Esophagus muscularis mucosa (tissue), 4 donors: ENCODE measurements at regions of chr1 and their contacts with region 1.

Region 1: DNA sequence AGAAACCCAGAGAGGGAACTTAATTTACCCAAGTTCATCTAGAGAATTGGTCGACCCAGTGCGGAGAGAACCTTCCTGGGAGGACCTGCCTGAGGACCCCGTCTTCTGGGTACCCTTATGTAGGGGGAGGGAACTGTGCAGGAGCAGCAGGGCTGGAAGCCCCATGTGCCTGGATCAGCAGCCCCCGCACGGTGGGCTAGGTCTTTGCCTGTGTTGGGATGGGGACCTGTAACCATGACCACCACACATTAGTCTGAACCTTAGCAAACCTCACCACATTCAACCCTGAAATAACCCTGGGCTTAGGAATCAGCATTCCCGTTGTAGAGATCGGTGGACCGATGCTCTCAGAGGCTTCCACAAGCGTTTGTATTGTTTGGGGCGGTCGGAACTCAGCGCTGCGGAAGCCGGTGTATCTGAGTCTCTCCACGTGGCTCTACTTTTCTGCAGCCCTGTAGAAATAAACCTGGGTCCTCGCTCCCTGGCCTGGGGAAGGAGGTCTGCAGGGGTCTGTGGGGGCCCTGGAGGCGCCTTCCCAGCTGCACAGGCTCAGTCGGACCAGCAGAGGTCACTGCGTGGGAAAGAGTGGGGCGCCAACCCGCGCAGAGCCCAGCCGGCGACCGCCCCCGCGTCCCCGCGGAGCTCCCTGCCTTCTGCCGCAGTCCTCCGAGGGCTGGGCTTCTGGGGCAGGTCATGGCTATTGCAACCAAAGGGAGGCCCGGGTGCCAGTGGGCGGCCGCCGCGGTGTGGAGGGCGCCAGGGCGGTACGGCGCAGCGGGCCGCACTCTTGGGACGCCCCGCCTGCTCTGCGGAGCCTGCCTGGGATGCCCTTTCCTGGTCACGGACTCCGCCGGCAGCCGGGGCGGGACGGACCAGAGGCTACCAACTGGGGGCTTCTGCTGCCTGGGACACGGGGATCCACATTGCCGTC is 36.2 kb upstream of the KCNA10 start:
- DNase-seq: no peak
- H3K4me3 ChIP-seq: peak overlapping the region; percentile 46 to 64 (median 52)
- H3K27ac ChIP-seq: peak overlapping the region; percentile 25 to 70 (median 52)
- H3K4me1 ChIP-seq: peaks cover 6 to 20% (median 16%) of the 10 kb centered on the region in 4 donors
- H3K27me3 ChIP-seq: peaks cover 0 to 44% (median 2%) of the 10 kb centered on the region in 4 donors
- CTCF ChIP-seq: peak; percentile 71 to 85 (median 77)
- EP300 ChIP-seq: no peak
- POLR2A ChIP-seq: no peak

Region 2: DNA sequence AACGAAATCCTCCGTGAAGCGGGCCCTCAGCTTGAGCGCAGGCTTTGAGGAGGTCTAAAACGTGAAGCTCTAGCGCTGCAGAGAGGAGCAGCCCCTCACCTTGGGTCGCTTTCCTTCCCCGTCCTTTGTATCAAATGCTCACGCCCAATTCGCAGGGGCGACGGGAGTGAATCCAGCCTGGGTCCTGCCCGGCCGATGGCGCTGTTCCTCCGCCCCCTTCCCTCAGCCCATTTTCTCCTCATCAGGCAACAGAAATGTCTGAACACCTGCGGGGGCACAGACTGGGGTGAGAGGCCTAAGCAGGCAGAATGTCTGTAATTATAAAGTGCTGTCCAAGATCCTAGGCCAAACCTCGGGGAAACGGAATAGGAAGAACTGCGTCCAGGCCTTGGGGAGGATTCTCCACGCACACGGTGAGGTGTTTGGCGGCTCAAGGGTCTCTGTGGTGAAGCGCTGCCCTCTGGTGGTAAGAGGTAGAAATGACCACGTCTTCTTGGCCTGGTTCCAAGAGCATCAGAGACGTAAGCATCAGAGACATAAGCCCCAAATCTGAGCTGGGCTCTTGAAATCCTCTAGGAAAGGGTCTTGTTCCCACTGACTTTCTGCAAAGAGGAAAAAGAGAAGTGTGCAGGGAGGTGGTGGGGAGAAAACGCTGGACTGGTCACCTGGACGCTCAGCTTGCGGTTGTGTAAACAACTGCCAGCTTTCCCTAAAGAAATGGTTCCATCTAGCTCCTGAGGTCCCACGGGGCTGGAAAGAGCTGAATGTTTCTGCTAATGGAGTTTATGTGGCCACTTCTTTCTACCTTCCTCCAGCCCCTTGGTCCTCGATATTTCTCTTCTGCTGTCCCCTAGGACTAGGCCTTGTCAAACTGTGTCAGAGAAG is 225.7 kb after region 1 on chr1:
- intact Hi-C with region 1: loop called (anchors 10 kb)
- DNase-seq: peak; percentile 94
- H3K4me3 ChIP-seq: no peak overlapping the region
- H3K27ac ChIP-seq: no peak overlapping the region
- H3K4me1 ChIP-seq: peaks cover 0 to 8% (median 4%) of the 10 kb centered on the region in 4 donors
- H3K27me3 ChIP-seq: peaks cover 0 to 31% (median 2%) of the 10 kb centered on the region in 4 donors
- CTCF ChIP-seq: peak; percentile 70 to 81 (median 73)
- EP300 ChIP-seq: no peak
- POLR2A ChIP-seq: no peak